IMR-90 (cell line): ENCODE measurements at regions of chr10 and their contacts with region 1.

Region 1: GRCh38 chr10:58414270-58415041 is 29.2 kb downstream of the TFAM start:
- DNase-seq: peak; percentile 80
- ATAC-seq: peak; percentile 91
- H3K4me3 ChIP-seq: no peak overlapping the region
- H3K27ac ChIP-seq: no peak overlapping the region
- H3K4me1 ChIP-seq: peaks cover 5% of the 10 kb centered on the region
- H3K27me3 ChIP-seq: no peaks in the 10 kb centered on the region
- CTCF ChIP-seq: peak; percentile 78
- POLR2A ChIP-seq: 0 out of 2 replicates have a peak, but pooled peaks have one; percentile 32
- RAD21 ChIP-seq: peak; percentile 93

Region 2: GRCh38 chr10:58531084-58531695 is 116.7 kb after region 1 on chr10:
- CTCF ChIA-PET with region 1: interaction called, 11 read pairs
- POLR2A ChIA-PET with region 1: no interaction called
- dilution Hi-C with region 1: no loop called
- in situ Hi-C with region 1: loop called (anchors 5 kb)
- intact Hi-C with region 1: loop called (anchors 1 kb)
- DNase-seq: peak; percentile 76
- ATAC-seq: peak; percentile 87
- H3K4me3 ChIP-seq: no peak overlapping the region
- H3K27ac ChIP-seq: no peak overlapping the region
- H3K4me1 ChIP-seq: 0 out of 2 replicates have a peak, but pooled peaks cover 2% of the 10 kb centered on the region
- H3K27me3 ChIP-seq: no peaks in the 10 kb centered on the region
- CTCF ChIP-seq: peak; percentile 82
- POLR2A ChIP-seq: no peak
- RAD21 ChIP-seq: peak; percentile 91

Region 3: GRCh38 chr10:58781873-58782488 is 367.5 kb after region 1 on chr10:
- CTCF ChIA-PET with region 1: no interaction called
- POLR2A ChIA-PET with region 1: no interaction called
- dilution Hi-C with region 1: no loop called
- in situ Hi-C with region 1: loop called (anchors 10 kb)
- intact Hi-C with region 1: loop called (anchors 2 kb)
- DNase-seq: peak; percentile 49
- ATAC-seq: peak; percentile 48; the same call in 1 of the 2 replicates
- H3K4me3 ChIP-seq: no peak overlapping the region
- H3K27ac ChIP-seq: no peak overlapping the region
- H3K4me1 ChIP-seq: peaks cover 8% of the 10 kb centered on the region
- H3K27me3 ChIP-seq: no peaks in the 10 kb centered on the region
- CTCF ChIP-seq: peak; percentile 65
- POLR2A ChIP-seq: no peak
- RAD21 ChIP-seq: peak; percentile 73

Region 4: DNA sequence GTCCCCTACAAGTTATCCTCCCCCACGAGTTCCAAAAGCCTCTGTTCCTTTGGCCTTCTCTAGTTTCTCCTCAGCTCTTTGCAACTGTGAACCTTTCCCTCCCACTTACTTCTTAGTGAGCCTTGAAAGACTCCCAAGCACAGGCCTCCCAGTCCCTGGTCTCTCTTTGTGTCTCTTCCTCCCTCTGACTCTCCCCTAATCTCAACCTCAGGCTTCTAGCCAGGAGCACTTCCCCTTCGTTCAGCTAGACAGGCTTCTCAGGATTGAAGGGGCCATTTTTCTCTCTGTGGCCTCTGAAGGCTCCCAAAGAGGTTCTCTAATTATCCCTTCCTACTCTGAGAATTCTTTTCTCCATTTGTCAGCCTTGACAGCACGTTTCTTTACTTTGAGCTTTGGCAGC is 711.8 kb after region 1 on chr10:
- CTCF ChIA-PET with region 1: no interaction called
- POLR2A ChIA-PET with region 1: no interaction called
- dilution Hi-C with region 1: no loop called
- in situ Hi-C with region 1: no loop called
- intact Hi-C with region 1: no loop called
- DNase-seq: no peak
- ATAC-seq: no peak
- H3K4me3 ChIP-seq: no peak overlapping the region
- H3K27ac ChIP-seq: no peak overlapping the region
- H3K4me1 ChIP-seq: no peaks in the 10 kb centered on the region
- H3K27me3 ChIP-seq: no peaks in the 10 kb centered on the region; the same call in 1 of the 2 replicates
- CTCF ChIP-seq: no peak
- POLR2A ChIP-seq: no peak
- RAD21 ChIP-seq: no peak

Region 5: DNA sequence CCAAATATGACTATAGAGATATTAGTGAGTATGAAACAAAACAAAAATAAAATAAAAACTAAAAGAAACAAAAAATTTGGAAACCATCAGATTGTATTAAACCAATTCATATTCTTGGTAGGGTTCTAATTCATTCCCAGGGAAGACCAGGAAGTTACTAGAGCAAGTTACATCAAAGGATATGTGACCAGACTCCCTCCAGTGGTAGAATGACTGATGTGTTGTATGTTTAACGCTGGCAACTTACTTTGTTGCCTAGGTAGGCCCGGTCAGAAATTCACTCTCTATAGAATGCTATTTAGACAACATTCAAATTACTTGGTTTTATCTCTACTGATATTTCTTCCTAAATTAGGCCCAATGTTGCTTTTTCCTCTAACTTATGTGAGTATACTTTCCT is 767.2 kb after region 1 on chr10:
- CTCF ChIA-PET with region 1: no interaction called
- POLR2A ChIA-PET with region 1: no interaction called
- dilution Hi-C with region 1: no loop called
- in situ Hi-C with region 1: no loop called
- intact Hi-C with region 1: loop called (anchors 5 kb)
- DNase-seq: peak; percentile 43
- ATAC-seq: peak; percentile 51; the same call in 1 of the 2 replicates
- H3K4me3 ChIP-seq: no peak overlapping the region
- H3K27ac ChIP-seq: no peak overlapping the region
- H3K4me1 ChIP-seq: no peaks in the 10 kb centered on the region
- H3K27me3 ChIP-seq: peaks cover 6% of the 10 kb centered on the region
- CTCF ChIP-seq: peak; percentile 32
- POLR2A ChIP-seq: no peak
- RAD21 ChIP-seq: peak; percentile 44

Region 6: GRCh38 chr10:59234816-59235429 is 820.5 kb after region 1 on chr10:
- CTCF ChIA-PET with region 1: no interaction called
- POLR2A ChIA-PET with region 1: no interaction called
- dilution Hi-C with region 1: no loop called
- in situ Hi-C with region 1: no loop called
- intact Hi-C with region 1: loop called (anchors 2 kb)
- DNase-seq: peak; percentile 58
- ATAC-seq: peak; percentile 61; the same call in 1 of the 2 replicates
- H3K4me3 ChIP-seq: no peak overlapping the region
- H3K27ac ChIP-seq: no peak overlapping the region
- H3K4me1 ChIP-seq: no peaks in the 10 kb centered on the region
- H3K27me3 ChIP-seq: no peaks in the 10 kb centered on the region
- CTCF ChIP-seq: peak; percentile 62
- POLR2A ChIP-seq: no peak
- RAD21 ChIP-seq: peak; percentile 47